Dorsolateral prefrontal cortex (tissue), 120 donors: ENCODE measurements at regions of chr22 and their contacts with region 1.

Region 1: GRCh38 chr22:46087336-46088277 is 62.7 kb upstream of the PPARA start:
- DNase-seq: peak; percentile 79 to 99 (median 98)
- H3K4me3 ChIP-seq: peak overlapping the region in 58 of 59 donors; percentile 6 to 97 (median 41)
- H3K27ac ChIP-seq: peak overlapping the region; percentile 92 to 100 (median 99)
- H3K27me3 ChIP-seq: no peaks in the 10 kb centered on the region
- CTCF ChIP-seq: peak in 16 of 56 donors; percentile 2 to 34 (median 20)

Region 2: GRCh38 chr22:45671768-45672563 is 415.6 kb before region 1 on chr22 and contains the start of gene ATXN10:
- intact Hi-C with region 1: no loop called
- DNase-seq: peak; percentile 53 to 87 (median 66)
- H3K4me3 ChIP-seq: peak within 1 kb of the TSS; percentile 56 to 96 (median 85)
- H3K27ac ChIP-seq: peak within 1 kb of the TSS; percentile 51 to 96 (median 89)
- H3K27me3 ChIP-seq: no peaks in the 10 kb centered on the region
- CTCF ChIP-seq: peak in 1 of 56 donors; percentile 25
- total RNA-seq, gene ATXN10: 180 to 317 (median 244) TPM

Region 3: DNA sequence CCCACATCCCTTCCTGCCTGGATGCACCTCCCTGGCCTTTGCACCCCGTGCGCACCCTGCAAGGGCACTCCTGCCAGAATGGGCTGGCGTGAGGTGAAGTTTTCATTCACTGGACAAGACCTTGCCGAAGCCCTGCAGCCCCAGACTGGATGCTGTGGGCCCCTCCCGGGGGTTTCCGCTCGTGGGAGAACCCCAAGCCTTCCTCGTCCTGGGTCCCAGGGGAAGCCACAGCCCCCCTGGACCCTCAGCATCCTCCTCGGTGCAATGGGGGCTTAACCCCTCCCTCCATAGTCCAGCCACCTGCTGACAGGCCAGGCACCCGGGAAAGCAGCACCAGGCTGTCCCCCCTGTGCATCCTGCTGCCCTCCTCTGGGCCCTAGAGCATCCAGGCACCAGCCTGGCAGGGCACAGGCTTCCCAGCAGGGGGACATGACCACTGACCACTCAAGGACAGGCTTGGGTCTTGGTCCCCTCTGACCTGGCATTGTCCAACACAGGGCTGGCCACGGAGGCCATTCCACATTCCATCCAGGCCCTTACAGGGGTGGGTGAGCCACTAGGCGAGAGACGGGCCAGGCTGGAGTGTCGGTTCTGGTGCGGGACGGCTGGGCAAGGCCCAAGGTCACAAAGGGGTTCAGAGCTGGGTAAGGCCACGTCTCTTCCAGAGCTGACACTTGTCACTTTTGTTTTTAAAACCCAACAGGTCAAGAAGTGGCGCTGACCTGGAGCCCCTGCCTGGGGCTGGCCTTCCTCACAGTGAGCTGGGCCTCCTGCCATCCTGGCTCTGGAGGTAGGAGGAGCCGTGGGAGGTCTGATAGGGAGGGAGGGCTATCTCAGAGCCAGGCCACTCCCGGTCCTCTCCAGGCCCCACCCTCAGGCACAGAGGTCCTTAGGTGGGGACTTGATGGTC is 21.2 kb after region 1 on chr22:
- intact Hi-C with region 1: loop called (anchors 2 kb)
- DNase-seq: peak in 1 of 10 donors; percentile 43
- H3K4me3 ChIP-seq: peak overlapping the region in 2 of 59 donors; percentile 3 to 12
- H3K27ac ChIP-seq: peak overlapping the region; percentile 68 to 98 (median 95)
- H3K27me3 ChIP-seq: no peaks in the 10 kb centered on the region
- CTCF ChIP-seq: no peak

Region 4: DNA sequence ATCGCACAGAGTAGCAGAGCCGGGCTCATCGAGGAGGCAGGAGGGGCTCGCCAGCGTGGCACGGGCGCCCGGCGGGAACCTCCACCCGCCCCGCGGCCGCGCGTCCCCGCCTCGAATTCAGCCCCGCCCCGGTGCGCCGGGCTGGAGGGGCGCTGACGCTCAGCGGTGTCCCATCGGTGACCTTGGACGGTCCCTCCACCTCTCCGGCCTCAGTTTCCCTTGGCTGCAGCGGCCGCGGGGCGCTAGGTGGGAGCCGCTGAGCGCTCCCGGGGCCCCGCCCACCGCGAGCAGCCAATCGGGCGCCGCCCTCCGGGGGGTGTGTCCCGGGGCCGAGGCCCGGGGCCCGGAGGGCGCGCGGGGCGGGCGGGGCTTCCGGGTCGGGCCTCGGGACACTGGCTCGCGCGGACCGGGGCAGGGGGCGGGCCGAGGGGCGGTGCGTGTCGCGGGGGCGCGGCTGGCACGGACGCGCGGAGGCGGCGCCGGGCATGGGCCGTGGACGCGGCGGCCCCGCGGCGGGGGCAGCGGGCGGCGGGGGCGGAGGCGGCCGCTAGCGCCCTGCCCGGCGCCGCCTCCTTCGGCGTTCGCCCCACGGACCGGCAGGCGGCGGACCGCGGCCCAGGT is 62.5 kb after region 1 on chr22 and contains the start of gene PPARA:
- intact Hi-C with region 1: no loop called
- DNase-seq: peak; percentile 57 to 93 (median 84)
- H3K4me3 ChIP-seq: peak within 1 kb of the TSS; percentile 69 to 98 (median 85)
- H3K27ac ChIP-seq: peak within 1 kb of the TSS; percentile 74 to 99 (median 97)
- H3K27me3 ChIP-seq: peaks cover 0 to 16% (median 0%) of the 10 kb centered on the region in 45 donors
- CTCF ChIP-seq: peak in 1 of 56 donors; percentile 15
- total RNA-seq, gene PPARA: 13.9 to 53.9 (median 22.6) TPM

Region 5: DNA sequence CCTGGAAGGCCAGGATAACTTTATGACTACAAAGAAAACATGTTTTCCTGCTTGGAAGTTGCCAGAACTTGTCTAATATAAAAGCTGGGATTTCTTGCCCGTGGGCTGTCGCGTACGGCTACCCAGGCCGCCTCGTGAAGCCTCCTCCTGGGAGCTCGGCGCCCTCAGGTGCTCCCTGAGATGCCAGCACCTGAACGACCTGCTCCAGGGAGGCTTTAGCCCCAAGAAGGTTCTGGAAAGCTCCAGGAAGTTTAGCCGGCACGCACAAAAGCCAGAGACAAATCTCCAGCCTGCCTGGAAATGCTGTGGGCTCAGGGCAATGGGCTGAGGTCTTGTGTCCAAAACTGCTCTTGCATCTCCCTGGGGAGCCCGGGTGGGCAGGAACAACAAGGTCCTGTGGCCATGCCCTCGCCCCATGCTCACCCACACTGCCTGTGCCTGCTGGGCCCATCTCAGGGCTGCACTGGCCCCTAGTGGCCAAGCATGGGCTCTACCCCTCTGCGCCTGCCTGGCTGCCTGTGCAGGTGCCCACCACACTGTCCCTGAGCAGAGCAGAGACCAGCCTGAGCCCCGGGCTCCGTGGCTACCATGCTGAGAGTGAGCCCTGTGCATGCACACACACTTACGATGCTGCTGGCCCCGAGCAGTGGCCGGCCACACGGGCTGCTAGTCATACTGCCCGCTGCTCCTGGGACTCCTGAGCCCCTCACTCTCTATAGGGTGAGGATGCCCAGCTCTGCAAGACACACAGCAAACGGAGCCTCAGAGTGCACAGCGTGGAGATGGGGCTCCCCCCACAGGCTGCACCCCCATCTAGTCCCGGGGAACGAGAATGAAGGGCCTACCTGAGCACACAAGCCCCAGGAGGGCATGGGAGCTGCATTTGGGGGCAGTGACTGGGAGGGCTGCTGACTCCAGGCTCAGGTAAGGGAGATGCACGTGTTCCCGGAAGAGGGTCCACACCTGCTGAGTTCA is 454.7 kb after region 1 on chr22:
- intact Hi-C with region 1: no loop called
- DNase-seq: peak; percentile 53 to 87 (median 71)
- H3K4me3 ChIP-seq: no peak overlapping the region
- H3K27ac ChIP-seq: no peak overlapping the region
- H3K27me3 ChIP-seq: peaks cover 0 to 31% (median 20%) of the 10 kb centered on the region in 45 donors
- CTCF ChIP-seq: peak; percentile 63 to 97 (median 84)